MCF 10A (cell line): ENCODE measurements at regions of chr15 and their contacts with region 1.

Region 1: DNA sequence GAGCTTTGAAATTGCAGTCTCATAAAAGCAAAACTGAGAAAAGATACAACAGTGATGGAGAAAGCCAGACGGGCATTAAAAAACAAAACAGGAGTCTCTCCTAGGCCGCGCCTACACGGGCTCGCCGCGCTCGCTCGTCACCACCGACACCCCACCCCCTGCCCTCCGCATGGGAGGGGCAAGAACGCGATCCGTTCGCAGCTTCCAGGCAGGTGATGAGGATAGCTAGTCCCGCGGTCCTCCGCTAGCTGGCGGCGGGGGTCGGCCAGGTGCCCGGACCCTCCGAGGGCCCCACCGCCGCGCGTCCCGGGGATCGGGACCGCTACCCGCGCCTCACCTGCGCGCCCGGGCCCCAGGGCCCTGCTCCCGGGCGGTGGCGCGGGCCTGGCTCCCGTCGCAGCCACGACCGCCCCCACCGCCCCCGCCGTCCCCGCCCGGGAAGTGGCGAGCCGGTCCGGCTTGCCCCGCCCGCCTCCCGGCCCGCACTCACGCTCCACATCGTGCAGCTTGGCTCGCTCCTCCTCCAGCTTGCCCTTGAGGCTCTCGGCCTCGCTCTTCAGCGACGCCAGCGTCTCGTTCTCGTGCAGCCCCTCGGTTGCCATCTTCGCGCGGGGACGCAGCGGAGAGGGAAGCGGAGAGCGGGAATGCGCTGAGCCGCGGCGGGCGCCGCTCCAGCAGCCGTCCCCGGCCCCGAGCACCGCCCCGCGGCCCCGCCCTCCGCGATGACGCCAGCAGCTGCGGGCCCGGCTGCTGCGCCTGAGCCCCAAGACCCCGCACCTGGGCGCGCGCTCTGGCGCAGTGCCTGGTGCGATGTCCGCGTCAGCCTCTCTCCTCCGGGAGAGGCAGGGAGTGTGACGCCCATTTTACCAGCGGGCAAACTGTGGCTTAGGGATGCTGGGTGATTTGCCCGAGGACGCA is 11.7 kb downstream of the GNB5 start:
- DNase-seq: peak; percentile 87
- H3K4me3 Mint-ChIP-seq: peak overlapping the region; percentile 81
- H3K27ac Mint-ChIP-seq: peak overlapping the region; percentile 93
- H3K4me1 Mint-ChIP-seq: peaks cover 10% of the 10 kb centered on the region
- H3K27me3 Mint-ChIP-seq: no peaks in the 10 kb centered on the region
- CTCF ChIP-seq: peak; percentile 21

Region 2: DNA sequence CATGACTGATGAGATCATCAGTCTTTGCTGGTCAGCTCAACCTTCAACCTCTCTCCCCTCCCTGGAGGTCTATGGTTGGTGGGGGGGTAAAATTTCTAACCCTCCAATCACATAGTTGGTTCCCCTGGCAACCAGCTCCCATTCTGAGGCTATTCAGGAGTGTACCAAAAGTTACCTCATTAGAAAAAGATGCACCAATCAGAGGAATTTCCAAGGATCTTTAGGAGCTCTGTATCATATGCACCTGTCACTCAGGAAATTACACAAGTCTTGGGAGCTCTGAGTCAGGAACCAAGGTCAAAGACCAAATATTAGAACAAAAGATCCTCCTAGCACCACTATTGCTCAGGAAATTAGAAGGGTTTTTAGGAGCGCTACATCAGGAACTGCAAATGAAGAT is 186.6 kb before region 1 on chr15:
- CTCF ChIA-PET with region 1: interaction called, 4 read pairs
- POLR2A ChIA-PET with region 1: interaction called, 17 read pairs
- intact Hi-C with region 1: no loop called
- DNase-seq: peak; percentile 71
- H3K4me3 Mint-ChIP-seq: no peak overlapping the region
- H3K27ac Mint-ChIP-seq: no peak overlapping the region
- H3K4me1 Mint-ChIP-seq: peaks cover 28% of the 10 kb centered on the region
- H3K27me3 Mint-ChIP-seq: no peaks in the 10 kb centered on the region
- CTCF ChIP-seq: no peak

Region 3: GRCh38 chr15:52128568-52128967 is 51.0 kb before region 1 on chr15:
- CTCF ChIA-PET with region 1: no interaction called
- POLR2A ChIA-PET with region 1: no interaction called
- intact Hi-C with region 1: no loop called
- DNase-seq: no peak
- H3K4me3 Mint-ChIP-seq: no peak overlapping the region
- H3K27ac Mint-ChIP-seq: no peak overlapping the region
- H3K4me1 Mint-ChIP-seq: no peaks in the 10 kb centered on the region
- H3K27me3 Mint-ChIP-seq: no peaks in the 10 kb centered on the region
- CTCF ChIP-seq: no peak

Region 4: GRCh38 chr15:52164631-52165265 is 14.8 kb before region 1 on chr15:
- CTCF ChIA-PET with region 1: interaction called, 4 read pairs
- POLR2A ChIA-PET with region 1: interaction called, 10 read pairs
- intact Hi-C with region 1: no loop called
- DNase-seq: no peak
- H3K4me3 Mint-ChIP-seq: no peak overlapping the region
- H3K27ac Mint-ChIP-seq: peak overlapping the region; percentile 86
- H3K4me1 Mint-ChIP-seq: peaks cover 16% of the 10 kb centered on the region
- H3K27me3 Mint-ChIP-seq: no peaks in the 10 kb centered on the region
- CTCF ChIP-seq: no peak

Region 5: DNA sequence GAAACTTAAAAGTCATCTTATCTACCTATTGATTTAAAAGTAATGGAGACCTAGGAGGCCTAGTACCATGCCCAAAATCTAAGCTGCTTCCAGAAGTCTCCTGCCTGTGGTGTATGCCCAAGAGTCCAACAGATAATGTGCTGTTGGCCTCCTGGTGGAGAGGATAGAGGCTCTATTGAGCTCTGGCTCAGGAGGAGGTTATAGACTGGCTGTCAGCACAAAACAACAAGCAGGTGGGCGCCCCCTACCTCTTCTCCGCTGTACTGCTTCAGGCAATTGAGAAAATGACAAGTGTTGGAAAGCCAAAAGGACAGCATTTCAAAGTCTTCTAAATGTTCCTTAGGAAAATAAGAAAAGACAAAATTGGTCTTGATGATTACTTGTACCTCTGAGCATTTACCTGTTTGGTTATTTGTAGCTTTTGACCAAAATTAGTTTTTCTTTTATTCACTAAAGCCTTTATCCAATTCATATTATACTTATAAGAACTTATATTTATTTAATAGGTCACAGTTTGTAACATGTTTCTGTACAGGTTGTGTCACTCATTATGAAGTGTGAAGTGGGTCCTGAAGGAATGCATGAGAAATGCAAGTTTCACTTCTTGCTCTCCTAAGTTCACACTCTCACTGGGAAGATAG is 28.9 kb after region 1 on chr15:
- CTCF ChIA-PET with region 1: interaction called, 21 read pairs
- POLR2A ChIA-PET with region 1: no interaction called
- intact Hi-C with region 1: loop called (anchors 1 kb)
- DNase-seq: peak; percentile 73
- H3K4me3 Mint-ChIP-seq: no peak overlapping the region
- H3K27ac Mint-ChIP-seq: no peak overlapping the region
- H3K4me1 Mint-ChIP-seq: no peaks in the 10 kb centered on the region
- H3K27me3 Mint-ChIP-seq: no peaks in the 10 kb centered on the region
- CTCF ChIP-seq: peak; percentile 83

Region 6: GRCh38 chr15:52466134-52466701 is 286.7 kb after region 1 on chr15:
- CTCF ChIA-PET with region 1: no interaction called
- POLR2A ChIA-PET with region 1: no interaction called
- intact Hi-C with region 1: no loop called
- DNase-seq: no peak
- H3K4me3 Mint-ChIP-seq: no peak overlapping the region
- H3K27ac Mint-ChIP-seq: no peak overlapping the region
- H3K4me1 Mint-ChIP-seq: peaks cover 6% of the 10 kb centered on the region
- H3K27me3 Mint-ChIP-seq: no peaks in the 10 kb centered on the region
- CTCF ChIP-seq: no peak

Region 7: GRCh38 chr15:52735231-52736089 is 555.9 kb after region 1 on chr15:
- CTCF ChIA-PET with region 1: interaction called, 6 read pairs
- POLR2A ChIA-PET with region 1: interaction called, 4 read pairs
- intact Hi-C with region 1: loop called (anchors 2 kb)
- DNase-seq: peak; percentile 81
- H3K4me3 Mint-ChIP-seq: no peak overlapping the region
- H3K27ac Mint-ChIP-seq: no peak overlapping the region
- H3K4me1 Mint-ChIP-seq: peaks cover 1% of the 10 kb centered on the region
- H3K27me3 Mint-ChIP-seq: no peaks in the 10 kb centered on the region
- CTCF ChIP-seq: peak; percentile 81